Motor neuron (in vitro differentiated cells): ENCODE measurements at regions of chr3 and their contacts with region 1.

Region 1: GRCh38 chr3:194682694-194683310 is 2.9 kb upstream of the FAM43A start:
- ATAC-seq: peak; percentile 41 to 71 (median 52)
- H3K4me3 ChIP-seq: no peak overlapping the region
- H3K27ac ChIP-seq: no peak overlapping the region
- H3K4me1 ChIP-seq: peaks cover 4 to 5% of the 10 kb centered on the region in 2 donors

Region 2: DNA sequence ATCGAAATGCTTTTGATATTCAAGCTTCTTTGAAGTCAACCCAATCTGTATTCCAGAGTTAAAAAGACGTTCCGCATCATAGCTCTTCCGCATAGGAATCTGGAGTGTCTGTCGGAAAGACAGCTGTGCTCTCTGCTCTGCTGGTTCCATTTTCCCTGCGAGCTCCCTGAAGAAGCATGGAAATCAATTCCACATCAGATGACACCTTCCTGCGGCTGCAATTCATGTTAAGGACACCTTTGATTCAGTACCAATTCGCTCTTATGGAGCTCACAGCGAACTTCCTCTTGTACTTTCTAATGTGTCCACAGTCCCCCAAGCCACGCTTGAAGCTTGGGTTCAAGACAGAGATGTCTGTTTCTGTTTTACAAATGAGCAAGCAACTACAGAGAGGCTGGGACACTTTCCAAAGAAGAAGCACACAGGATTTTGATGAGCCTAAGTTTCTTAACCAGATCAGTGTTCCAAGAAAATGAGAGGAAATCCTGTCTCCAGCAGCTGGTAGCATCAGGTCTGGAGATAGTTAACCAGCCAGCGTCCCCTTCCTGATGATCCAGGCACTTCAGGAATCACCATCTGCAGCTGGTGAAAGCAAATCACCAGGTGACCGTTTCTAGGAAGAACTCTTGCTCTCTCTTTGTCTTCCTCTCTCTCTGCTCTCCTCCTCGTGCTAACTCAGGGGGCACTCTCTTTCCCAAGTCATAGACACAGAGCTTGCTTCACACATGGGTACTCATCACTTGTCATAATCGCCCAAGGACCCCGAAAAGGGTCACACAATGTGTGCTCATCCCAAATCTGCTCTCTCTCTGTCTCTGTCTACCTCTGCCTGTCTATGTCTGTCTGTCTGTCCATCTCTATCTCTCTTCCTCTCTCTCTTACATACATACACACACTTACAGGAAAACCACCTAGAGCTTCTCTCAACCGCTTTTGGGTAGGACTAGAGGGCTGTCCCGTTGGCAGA is 284.6 kb after region 1 on chr3:
- in situ Hi-C with region 1: loop called in 1 of 9 experiments (anchors 25 kb)
- ATAC-seq: peak in 3 of 8 experiments; percentile 33 to 51 (median 39)
- H3K4me3 ChIP-seq: no peak overlapping the region
- H3K27ac ChIP-seq: no peak overlapping the region
- H3K4me1 ChIP-seq: no peaks in the 10 kb centered on the region

Region 3: DNA sequence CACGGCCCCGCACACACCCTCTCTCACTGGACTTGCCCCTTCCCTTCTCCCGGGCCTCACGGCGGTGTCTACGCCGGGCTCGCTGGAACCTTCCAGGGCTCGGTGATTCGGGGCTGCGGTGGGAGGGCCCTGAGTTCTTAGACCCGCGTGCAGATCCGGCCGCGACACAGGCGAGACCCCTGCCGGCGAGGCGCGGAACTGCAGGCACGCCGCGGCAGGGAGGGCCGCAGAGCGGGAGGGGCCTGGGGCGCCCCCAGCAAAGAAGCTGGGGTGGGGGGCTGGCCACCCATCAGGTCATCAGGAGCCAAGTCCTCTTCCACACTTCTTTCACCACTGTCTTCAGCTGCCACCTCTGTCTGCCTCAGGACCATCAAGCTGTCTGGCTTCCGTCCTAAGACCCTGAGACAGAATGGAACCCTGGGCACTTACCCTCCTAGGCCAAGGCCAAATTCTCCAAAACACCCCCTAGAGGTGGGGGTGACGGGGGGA is 423.7 kb after region 1 on chr3:
- in situ Hi-C with region 1: loop called in 8 of 9 experiments (anchors 10 to 25 kb)
- ATAC-seq: peak; percentile 77 to 97 (median 80)
- H3K4me3 ChIP-seq: no peak overlapping the region
- H3K27ac ChIP-seq: no peak overlapping the region
- H3K4me1 ChIP-seq: peaks cover 25 to 27% of the 10 kb centered on the region in 2 donors

Region 4: GRCh38 chr3:195147649-195148095 is 464.9 kb after region 1 on chr3:
- in situ Hi-C with region 1: loop called in 1 of 9 experiments (anchors 25 kb)
- ATAC-seq: peak in 3 of 8 experiments; percentile 84 to 98 (median 94)
- H3K4me3 ChIP-seq: no peak overlapping the region
- H3K27ac ChIP-seq: peak overlapping the region in 1 of 2 donors; percentile 20
- H3K4me1 ChIP-seq: peaks cover 26 to 29% of the 10 kb centered on the region in 2 donors

Region 5: DNA sequence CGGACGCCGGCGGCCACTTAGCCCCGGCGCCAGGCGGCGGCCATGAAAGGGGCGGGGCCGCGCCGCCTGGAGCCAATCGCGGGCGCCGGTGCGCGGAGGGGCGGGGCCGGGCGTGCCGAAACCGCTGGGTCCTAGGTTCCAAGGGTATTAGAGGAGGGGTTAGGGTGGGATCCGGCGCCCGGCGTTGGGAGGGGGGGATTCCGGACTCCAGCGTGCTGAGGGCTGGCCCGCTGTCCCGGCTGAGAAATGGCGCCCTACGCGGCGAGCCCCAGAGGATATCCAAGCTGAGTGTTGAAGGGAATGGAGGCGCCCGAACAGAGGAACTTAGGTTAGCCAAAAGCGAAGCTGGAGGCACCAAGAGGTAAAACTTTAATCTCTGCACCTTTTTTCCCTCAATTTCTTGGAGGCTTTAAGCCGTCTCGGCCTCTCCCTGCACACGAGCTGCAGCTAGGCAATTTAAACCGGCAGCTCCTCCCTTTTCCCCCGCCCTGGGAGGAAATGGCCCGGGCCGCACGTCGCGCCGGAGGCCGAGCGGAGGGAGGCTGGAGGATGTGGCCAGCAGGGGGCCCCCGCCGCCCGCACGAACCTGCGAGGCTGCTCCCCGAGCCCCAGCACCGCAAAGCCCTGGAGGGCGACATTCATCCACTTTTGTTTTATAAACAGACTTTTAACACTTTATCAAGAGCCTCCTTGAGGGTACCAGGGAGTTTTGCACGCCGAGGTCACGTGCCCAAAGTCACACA is 588.5 kb after region 1 on chr3 and contains the start of gene XXYLT1:
- in situ Hi-C with region 1: loop called in 3 of 9 experiments (anchors 10 to 25 kb)
- ATAC-seq: peak; percentile 76 to 90 (median 88)
- H3K4me3 ChIP-seq: peak within 1 kb of the TSS; percentile 82 to 99 (median 96)
- H3K27ac ChIP-seq: peak within 1 kb of the TSS; percentile 86 to 93
- H3K4me1 ChIP-seq: peaks cover 12 to 15% of the 10 kb centered on the region in 2 donors
- total RNA-seq, gene XXYLT1: 8.7 to 35.9 (median 16.1) TPM

Region 6: DNA sequence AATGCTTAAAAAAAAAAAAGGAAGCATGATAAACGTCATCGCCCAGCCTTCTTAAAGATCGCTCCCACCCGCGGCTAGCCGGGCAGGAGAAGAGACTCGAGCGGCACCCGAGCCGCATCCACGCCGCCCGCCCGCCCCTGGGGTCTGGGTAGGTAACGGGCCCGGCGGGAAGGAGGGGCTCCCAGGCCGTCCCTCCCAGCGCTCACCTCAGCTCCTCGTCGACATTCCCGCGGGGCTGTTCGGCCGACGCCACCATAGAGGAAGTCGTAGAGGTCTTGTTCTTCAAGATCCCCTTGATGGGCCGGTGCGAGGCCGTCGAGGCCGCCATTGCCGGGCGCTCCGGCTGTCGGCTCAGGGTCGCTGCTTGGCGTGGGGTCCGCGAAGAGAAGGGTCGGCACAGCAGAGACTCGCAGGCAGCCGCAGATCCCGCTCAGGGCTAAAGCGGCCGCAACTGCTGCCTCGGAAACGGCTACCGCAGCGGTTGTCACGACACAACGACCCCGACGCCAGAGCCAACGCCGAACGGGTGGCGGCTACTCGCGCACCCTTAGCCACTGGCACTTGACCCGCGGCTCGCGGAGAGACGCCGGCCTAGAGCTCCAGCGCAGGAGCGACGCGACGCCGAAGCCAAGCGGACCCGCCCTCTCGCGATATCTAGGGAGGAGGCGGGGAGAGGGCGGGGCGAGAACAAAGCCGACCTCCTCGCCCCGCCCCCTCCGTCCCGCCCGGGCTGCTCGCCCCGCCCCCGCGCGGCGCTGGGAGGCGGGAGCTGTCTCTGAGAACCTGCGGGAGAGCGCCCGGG is 860.1 kb after region 1 on chr3 and contains the start of gene PPP1R2:
- in situ Hi-C with region 1: loop called in 1 of 9 experiments (anchors 25 kb)
- ATAC-seq: peak; percentile 85 to 96 (median 90)
- H3K4me3 ChIP-seq: peak within 1 kb of the TSS; percentile 53 to 84 (median 82)
- H3K27ac ChIP-seq: peak within 1 kb of the TSS; percentile 79 to 88
- H3K4me1 ChIP-seq: peaks cover 19 to 27% of the 10 kb centered on the region in 2 donors
- total RNA-seq, gene PPP1R2: 28.0 to 65.0 (median 36.9) TPM